ENCODE measurements at regions of chr3 and their contacts with region 1.

Region 1: GRCh38 chr3:154060238-154061000 is 60.8 kb upstream of the ARHGEF26 start:
- DNase-seq: peak in 1 of 2 donors; percentile 18
- H3K4me3 ChIP-seq: no peak overlapping the region
- CTCF ChIP-seq: no peak
- POLR2A ChIP-seq: no peak

Region 2: DNA sequence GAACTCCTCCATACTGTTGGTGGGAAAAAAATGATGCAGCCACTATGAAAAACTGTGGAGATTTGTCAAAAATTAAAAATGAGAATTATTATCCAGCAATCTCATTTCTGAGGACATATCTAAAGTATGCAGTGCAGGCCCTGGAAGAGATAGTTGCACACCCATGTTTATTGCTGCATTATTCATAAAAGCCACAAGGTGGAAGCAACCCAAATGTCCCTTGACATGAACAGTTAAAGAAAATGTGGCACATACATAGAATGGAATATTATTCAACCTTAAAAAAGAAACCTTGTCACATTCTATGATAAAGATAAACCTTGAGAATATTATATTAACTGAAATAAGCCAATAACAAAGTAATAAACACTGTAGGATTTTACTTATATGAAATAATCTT is 20.1 kb before region 1 on chr3:
- intact Hi-C with region 1: no loop called
- DNase-seq: no peak
- H3K4me3 ChIP-seq: no peak overlapping the region
- CTCF ChIP-seq: no peak
- POLR2A ChIP-seq: no peak

Region 3: GRCh38 chr3:154338570-154338969 is 278.2 kb after region 1 on chr3:
- intact Hi-C with region 1: no loop called
- DNase-seq: no peak
- H3K4me3 ChIP-seq: no peak overlapping the region
- CTCF ChIP-seq: no peak
- POLR2A ChIP-seq: no peak

Region 4: DNA sequence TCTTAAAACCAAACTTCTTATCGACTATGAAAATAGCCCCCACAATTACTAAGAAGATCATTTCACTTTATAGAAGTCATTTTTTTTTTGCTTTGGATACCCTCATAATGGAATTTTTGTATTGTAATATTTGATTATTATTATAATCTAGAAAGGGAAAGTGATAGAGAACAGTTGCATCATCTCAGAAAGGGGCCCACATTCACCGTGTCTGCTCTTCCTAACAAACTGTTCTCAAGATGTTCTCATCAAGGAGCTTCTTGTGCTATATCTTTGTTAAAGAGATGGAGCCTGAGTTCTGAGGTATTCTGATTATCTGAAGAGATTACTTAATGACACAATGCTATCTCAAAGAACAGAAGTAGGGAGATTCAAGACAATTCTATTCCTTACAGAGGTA is 1069.0 kb after region 1 on chr3:
- intact Hi-C with region 1: loop called (anchors 5 kb)
- DNase-seq: no peak
- H3K4me3 ChIP-seq: no peak overlapping the region
- CTCF ChIP-seq: no peak
- POLR2A ChIP-seq: no peak

Measured in lower leg skin (tissue), 4 donors.